ENCODE measurements at regions of chr4 and their contacts with region 1.

Region 1: DNA sequence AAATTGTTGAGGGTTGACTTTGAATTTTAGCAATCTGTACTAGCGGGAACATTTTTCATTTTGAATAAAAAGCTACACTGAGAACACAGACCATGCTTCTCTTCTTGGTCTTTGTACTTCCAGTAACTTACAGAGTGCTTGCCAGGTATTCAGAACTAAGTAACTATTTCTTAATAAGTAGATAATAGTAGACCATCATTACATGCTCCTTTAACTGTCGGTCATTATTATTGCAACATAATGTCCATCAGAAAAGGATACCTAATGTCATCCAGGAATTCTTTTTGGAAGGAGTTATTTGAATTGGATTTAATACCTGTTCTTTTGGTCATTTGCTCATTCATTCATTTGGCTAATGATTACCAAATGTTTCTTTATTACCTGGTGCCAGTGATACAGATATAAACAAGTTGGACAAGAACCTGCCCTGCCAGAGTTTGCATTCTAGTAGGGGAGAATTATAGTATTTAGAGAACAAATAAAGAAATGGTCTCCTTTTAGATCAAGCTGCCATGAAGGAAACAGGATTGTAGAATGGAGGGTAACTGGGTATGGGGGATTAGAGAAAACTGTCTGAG is 32.7 kb downstream of the CWH43 start:
- DNase-seq: no peak
- H3K4me3 Mint-ChIP-seq: no peak overlapping the region
- H3K27ac Mint-ChIP-seq: no peak overlapping the region
- H3K4me1 Mint-ChIP-seq: no peaks in the 10 kb centered on the region
- H3K27me3 Mint-ChIP-seq: peaks cover 8% of the 10 kb centered on the region

Region 2: GRCh38 chr4:48752726-48753125 is 266.1 kb before region 1 on chr4:
- CTCF ChIA-PET with region 1: no interaction called
- POLR2A ChIA-PET with region 1: no interaction called
- intact Hi-C with region 1: no loop called
- DNase-seq: no peak
- H3K4me3 Mint-ChIP-seq: no peak overlapping the region
- H3K27ac Mint-ChIP-seq: no peak overlapping the region
- H3K4me1 Mint-ChIP-seq: peaks cover 74% of the 10 kb centered on the region
- H3K27me3 Mint-ChIP-seq: no peaks in the 10 kb centered on the region

Region 3: DNA sequence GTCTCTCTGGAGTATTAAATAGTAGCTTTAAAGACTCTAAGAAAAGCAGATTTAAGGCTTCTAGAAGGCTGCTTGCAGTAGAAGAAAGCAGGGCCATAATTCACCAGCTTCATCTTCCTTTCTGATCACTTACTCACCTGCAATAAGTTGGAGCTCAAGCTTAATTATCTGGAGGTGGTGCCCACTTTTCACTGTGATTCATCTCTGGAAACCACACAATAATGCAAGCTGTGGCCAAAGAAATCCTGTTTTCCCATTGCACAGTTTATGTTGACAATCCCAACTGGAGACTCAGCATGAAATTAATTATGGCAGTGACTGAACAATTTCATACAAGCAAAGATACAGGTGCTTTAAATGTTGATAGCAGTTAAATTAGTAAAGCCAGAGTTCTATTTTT is 18.0 kb before region 1 on chr4:
- CTCF ChIA-PET with region 1: no interaction called
- POLR2A ChIA-PET with region 1: no interaction called
- intact Hi-C with region 1: loop called (anchors 1 kb)
- DNase-seq: no peak
- H3K4me3 Mint-ChIP-seq: no peak overlapping the region
- H3K27ac Mint-ChIP-seq: no peak overlapping the region
- H3K4me1 Mint-ChIP-seq: no peaks in the 10 kb centered on the region
- H3K27me3 Mint-ChIP-seq: peaks cover 12% of the 10 kb centered on the region